Thyroid gland (tissue), 4 donors: ENCODE measurements at regions of chr2 and their contacts with region 1.

Region 1: GRCh38 chr2:72993147-72993932 is 76.0 kb downstream of the EMX1 start:
- DNase-seq: peak in 1 of 2 donors; percentile 13
- H3K4me3 ChIP-seq: no peak overlapping the region
- H3K27ac ChIP-seq: no peak overlapping the region
- H3K4me1 ChIP-seq: no peaks in the 10 kb centered on the region
- H3K27me3 ChIP-seq: no peaks in the 10 kb centered on the region
- CTCF ChIP-seq: peak; percentile 63 to 82 (median 68)
- POLR2A ChIP-seq: no peak

Region 2: DNA sequence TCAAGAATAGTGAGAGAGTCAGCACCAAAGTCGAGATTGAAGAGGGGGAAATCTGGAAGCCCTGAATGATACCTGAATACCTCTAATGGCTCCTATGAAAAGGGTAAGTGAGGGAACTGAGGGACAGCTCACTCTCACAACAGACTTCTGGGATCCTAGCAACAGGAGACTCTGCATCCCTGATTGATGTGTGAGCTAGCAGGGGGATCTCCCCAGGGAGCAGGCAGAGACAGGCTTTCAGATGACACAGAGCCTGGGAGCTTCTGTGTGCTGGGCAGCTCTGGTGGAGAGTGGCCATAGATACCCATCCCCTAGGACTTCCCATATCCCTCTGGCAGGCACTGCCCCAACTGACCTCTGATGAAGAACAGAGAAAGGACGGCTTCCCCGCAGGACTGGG is 373.7 kb before region 1 on chr2:
- intact Hi-C with region 1: no loop called
- DNase-seq: no peak
- H3K4me3 ChIP-seq: no peak overlapping the region
- H3K27ac ChIP-seq: no peak overlapping the region
- H3K4me1 ChIP-seq: no peaks in the 10 kb centered on the region
- H3K27me3 ChIP-seq: no peaks in the 10 kb centered on the region
- CTCF ChIP-seq: no peak
- POLR2A ChIP-seq: no peak

Region 3: GRCh38 chr2:72630767-72631166 is 362.6 kb before region 1 on chr2:
- intact Hi-C with region 1: no loop called
- DNase-seq: no peak
- H3K4me3 ChIP-seq: no peak overlapping the region
- H3K27ac ChIP-seq: no peak overlapping the region
- H3K4me1 ChIP-seq: peaks cover 4 to 5% of the 10 kb centered on the region in 2 donors
- H3K27me3 ChIP-seq: no peaks in the 10 kb centered on the region
- CTCF ChIP-seq: no peak
- POLR2A ChIP-seq: no peak

Region 4: GRCh38 chr2:73163483-73164367 is 170.4 kb after region 1 on chr2:
- intact Hi-C with region 1: loop called (anchors 5 kb)
- DNase-seq: peak; percentile 66 to 69
- H3K4me3 ChIP-seq: no peak overlapping the region
- H3K27ac ChIP-seq: no peak overlapping the region
- H3K4me1 ChIP-seq: no peaks in the 10 kb centered on the region
- H3K27me3 ChIP-seq: no peaks in the 10 kb centered on the region
- CTCF ChIP-seq: peak; percentile 69 to 90 (median 80)
- POLR2A ChIP-seq: no peak

Region 5: GRCh38 chr2:73503992-73504570 is 510.7 kb after region 1 on chr2:
- intact Hi-C with region 1: no loop called
- DNase-seq: no peak
- H3K4me3 ChIP-seq: no peak overlapping the region
- H3K27ac ChIP-seq: no peak overlapping the region
- H3K4me1 ChIP-seq: no peaks in the 10 kb centered on the region
- H3K27me3 ChIP-seq: no peaks in the 10 kb centered on the region
- CTCF ChIP-seq: no peak
- POLR2A ChIP-seq: no peak